Body of pancreas (tissue), 4 donors: ENCODE measurements at regions of chr1 and their contacts with region 1.

Region 1: DNA sequence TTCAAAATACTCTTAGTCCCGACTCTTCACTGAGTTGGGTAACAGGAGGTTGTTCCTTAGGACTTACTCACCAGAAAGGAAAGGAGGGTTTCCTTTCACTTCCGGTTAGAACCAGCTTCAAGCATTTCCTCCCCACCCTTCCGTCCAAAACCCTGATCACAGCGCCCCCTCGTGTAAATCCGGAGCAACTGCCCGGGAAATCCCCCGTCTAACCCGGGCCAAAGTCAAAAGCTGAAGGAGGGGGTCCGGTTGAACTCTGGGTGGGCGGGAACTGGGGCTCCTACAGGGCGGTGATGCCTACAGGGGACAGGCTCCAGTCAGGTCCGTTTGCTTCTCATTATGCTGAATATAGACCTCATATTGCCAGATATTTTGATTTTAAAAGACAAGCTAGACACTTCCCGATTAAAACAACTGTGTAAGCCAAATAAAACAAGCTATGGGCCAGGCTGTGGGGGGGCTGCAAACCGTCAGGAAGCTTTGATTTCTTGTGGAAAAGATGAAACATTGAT is 15.0 kb upstream of the MTARC2 start:
- DNase-seq: peak; percentile 62 to 76 (median 70)
- ATAC-seq: peak; percentile 92
- H3K4me3 ChIP-seq: no peak overlapping the region
- H3K27ac ChIP-seq: peak overlapping the region in 2 of 4 donors; percentile 38 to 59
- H3K4me1 ChIP-seq: peaks cover 27% of the 10 kb centered on the region
- H3K27me3 ChIP-seq: no peaks in the 10 kb centered on the region
- CTCF ChIP-seq: peak; percentile 85 to 92 (median 88)
- POLR2A ChIP-seq: no peak

Region 2: GRCh38 chr1:219876798-219877209 is 856.3 kb before region 1 on chr1:
- intact Hi-C with region 1: no loop called
- DNase-seq: peak in 2 of 4 donors; percentile 4 to 9
- ATAC-seq: no peak
- H3K4me3 ChIP-seq: no peak overlapping the region
- H3K27ac ChIP-seq: no peak overlapping the region
- H3K4me1 ChIP-seq: no peaks in the 10 kb centered on the region
- H3K27me3 ChIP-seq: no peaks in the 10 kb centered on the region
- CTCF ChIP-seq: peak in 1 of 7 experiments; percentile 11
- POLR2A ChIP-seq: no peak

Region 3: DNA sequence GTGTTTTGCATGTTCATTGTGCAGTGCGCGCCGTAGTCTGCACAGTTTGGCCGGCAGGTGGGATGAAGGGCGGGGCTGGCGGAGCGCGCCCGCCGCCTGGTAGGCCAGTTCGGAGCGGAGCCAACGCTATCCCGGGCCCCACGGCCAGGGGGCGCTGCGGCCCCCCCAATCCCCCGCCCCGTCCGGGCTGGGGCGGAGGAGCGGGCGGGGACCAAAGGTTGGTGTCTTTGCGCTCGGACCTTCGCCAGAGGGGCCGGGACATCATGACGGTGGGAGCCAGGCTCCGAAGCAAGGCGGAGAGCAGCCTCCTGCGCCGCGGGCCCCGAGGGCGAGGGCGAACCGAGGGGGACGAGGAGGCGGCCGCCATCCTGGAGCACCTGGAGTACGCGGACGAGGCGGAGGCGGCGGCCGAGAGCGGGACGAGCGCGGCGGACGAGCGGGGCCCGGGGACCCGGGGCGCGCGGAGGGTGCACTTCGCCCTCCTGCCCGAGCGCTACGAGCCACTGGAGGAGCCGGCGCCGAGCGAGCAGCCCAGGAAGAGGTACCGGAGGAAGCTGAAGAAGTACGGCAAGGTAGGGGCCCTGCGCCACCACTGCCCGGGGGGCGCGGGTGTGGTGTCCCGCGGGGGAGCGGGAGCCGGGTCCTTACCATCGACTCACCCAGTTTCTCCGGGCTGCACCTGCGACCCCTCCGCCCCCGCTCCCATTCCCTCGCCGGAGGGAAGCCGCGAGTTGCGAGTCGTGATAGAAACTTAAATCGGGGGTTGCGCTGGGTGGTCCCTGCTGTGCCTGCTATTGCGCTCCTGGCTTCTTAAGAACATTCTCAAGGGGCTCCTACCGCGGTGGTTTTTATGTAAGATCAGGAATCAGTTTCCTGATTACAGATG is 42.8 kb before region 1 on chr1 and contains the start of gene C1orf115:
- intact Hi-C with region 1: loop called (anchors 5 kb)
- DNase-seq: peak; percentile 82 to 92 (median 86)
- ATAC-seq: peak; percentile 97
- H3K4me3 ChIP-seq: peak within 1 kb of the TSS; percentile 86
- H3K27ac ChIP-seq: peak within 1 kb of the TSS in 3 of 4 donors; percentile 57 to 70 (median 62)
- H3K4me1 ChIP-seq: peaks cover 14% of the 10 kb centered on the region
- H3K27me3 ChIP-seq: no peaks in the 10 kb centered on the region
- CTCF ChIP-seq: peak; percentile 97 to 99 (median 98)
- POLR2A ChIP-seq: peak; percentile 31 to 58 (median 54)
- total RNA-seq, gene C1orf115: 10.9 to 11.4 TPM

Region 4: GRCh38 chr1:220786337-220787068 is 53.4 kb after region 1 on chr1 and contains the start of gene MTARC1:
- intact Hi-C with region 1: no loop called
- DNase-seq: peak; percentile 76 to 89 (median 86)
- ATAC-seq: peak; percentile 83
- H3K4me3 ChIP-seq: peak within 1 kb of the TSS; percentile 21 to 35
- H3K27ac ChIP-seq: peak within 1 kb of the TSS; percentile 69 to 86 (median 85)
- H3K4me1 ChIP-seq: peaks cover 17% of the 10 kb centered on the region
- H3K27me3 ChIP-seq: no peaks in the 10 kb centered on the region
- CTCF ChIP-seq: peak in 4 of 7 experiments; percentile 17 to 47 (median 32)
- POLR2A ChIP-seq: peak; percentile 61 to 66 (median 63)
- total RNA-seq, gene MTARC1: 5.2 to 71.5 TPM

Region 5: GRCh38 chr1:220999872-221000863 is 267.0 kb after region 1 on chr1:
- intact Hi-C with region 1: no loop called
- DNase-seq: peak in 2 of 4 donors; percentile 9 to 71
- ATAC-seq: peak; percentile 35
- H3K4me3 ChIP-seq: no peak overlapping the region
- H3K27ac ChIP-seq: no peak overlapping the region
- H3K4me1 ChIP-seq: no peaks in the 10 kb centered on the region
- H3K27me3 ChIP-seq: no peaks in the 10 kb centered on the region
- CTCF ChIP-seq: no peak
- POLR2A ChIP-seq: no peak